Activated naive CD4-positive, alpha-beta T cell treated with anti-CD3 and anti-CD28 coated beads for 36 hours (primary cell): ENCODE measurements at regions of chr1 and their contacts with region 1.

Region 1: GRCh38 chr1:48471691-48472576 is at the start of gene SPATA6:
- DNase-seq: peak; percentile 97
- H3K4me3 Mint-ChIP-seq: peak within 1 kb of the TSS; percentile 80
- H3K27ac Mint-ChIP-seq: no peak within 1 kb of the TSS
- H3K4me1 Mint-ChIP-seq: peaks cover 23% of the 10 kb centered on the region
- H3K27me3 Mint-ChIP-seq: peaks cover 20% of the 10 kb centered on the region
- total RNA-seq, gene SPATA6: 1.6 to 1.8 TPM

Region 2: GRCh38 chr1:47313915-47314664 is 1157.8 kb before region 1 on chr1 and contains the start of gene STIL:
- CTCF ChIA-PET with region 1: no interaction called
- intact Hi-C with region 1: loop called (anchors 5 kb)
- DNase-seq: peak; percentile 99
- H3K4me3 Mint-ChIP-seq: peak within 1 kb of the TSS; percentile 96
- H3K27ac Mint-ChIP-seq: peak within 1 kb of the TSS; percentile 95
- H3K4me1 Mint-ChIP-seq: peaks cover 10% of the 10 kb centered on the region
- H3K27me3 Mint-ChIP-seq: no peaks in the 10 kb centered on the region
- total RNA-seq, gene STIL: 41.4 to 43.5 TPM

Region 3: GRCh38 chr1:48223366-48224240 is 248.3 kb before region 1 on chr1:
- CTCF ChIA-PET with region 1: no interaction called
- intact Hi-C with region 1: loop called (anchors 2 kb)
- DNase-seq: no peak
- H3K4me3 Mint-ChIP-seq: no peak overlapping the region
- H3K27ac Mint-ChIP-seq: no peak overlapping the region
- H3K4me1 Mint-ChIP-seq: peaks cover 2% of the 10 kb centered on the region
- H3K27me3 Mint-ChIP-seq: no peaks in the 10 kb centered on the region

Region 4: DNA sequence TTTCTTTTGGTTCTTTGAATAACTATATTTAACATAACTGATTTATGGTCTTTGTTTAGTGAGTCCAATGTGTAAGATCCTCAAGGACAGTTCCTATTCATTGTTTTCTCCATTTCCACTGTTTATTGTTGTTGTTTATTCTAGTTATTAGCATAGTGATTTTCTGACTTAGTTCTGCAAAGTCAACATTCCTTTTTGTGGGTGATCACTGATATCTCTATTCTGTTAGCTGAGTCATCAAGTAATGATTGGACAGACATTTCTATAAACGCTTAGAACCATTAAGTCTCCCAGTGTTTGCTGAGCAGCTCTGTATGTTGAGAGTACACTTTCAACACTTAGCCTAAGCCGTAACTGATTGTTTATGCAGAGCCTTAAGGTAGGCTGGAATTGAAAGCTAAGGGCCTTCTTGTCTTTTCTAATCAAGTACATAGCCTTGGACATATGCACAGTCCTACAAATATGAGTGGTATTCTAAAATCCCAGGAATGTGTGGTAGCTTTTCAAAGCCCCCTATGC is 162.3 kb before region 1 on chr1:
- CTCF ChIA-PET with region 1: no interaction called
- intact Hi-C with region 1: no loop called
- DNase-seq: no peak
- H3K4me3 Mint-ChIP-seq: no peak overlapping the region
- H3K27ac Mint-ChIP-seq: no peak overlapping the region
- H3K4me1 Mint-ChIP-seq: no peaks in the 10 kb centered on the region
- H3K27me3 Mint-ChIP-seq: no peaks in the 10 kb centered on the region

Region 5: DNA sequence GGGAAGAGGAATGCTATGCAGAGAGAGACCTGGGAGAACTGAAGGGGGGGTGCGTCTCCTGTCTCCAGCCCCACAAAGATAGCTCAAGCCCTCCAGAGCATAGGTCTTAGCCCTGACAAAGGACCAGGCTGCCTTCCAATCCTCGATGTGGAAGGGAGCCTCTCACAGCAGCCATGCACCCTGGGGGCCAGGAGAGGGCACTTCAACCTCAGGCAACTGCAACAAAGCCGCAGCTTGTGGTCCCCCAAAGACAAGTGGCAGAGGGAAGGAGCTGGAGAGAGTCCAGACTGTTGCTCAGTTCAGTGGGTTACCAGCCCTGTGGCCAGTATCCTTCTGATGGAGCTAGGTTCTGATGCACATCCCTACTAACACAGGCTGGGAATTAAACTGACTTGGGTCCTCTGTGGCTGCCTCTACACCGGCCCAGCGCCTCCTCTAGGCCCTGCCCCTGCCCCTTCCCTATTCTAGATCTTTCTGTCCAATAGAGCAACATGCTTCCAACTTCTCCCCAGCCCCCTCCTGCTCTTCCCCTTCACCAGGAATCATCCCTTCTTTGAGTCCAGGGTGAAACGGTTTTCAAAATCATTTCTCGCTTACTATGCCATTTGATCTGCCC is 100.8 kb after region 1 on chr1:
- CTCF ChIA-PET with region 1: no interaction called
- intact Hi-C with region 1: no loop called
- DNase-seq: peak; percentile 38
- H3K4me3 Mint-ChIP-seq: no peak overlapping the region
- H3K27ac Mint-ChIP-seq: no peak overlapping the region
- H3K4me1 Mint-ChIP-seq: no peaks in the 10 kb centered on the region
- H3K27me3 Mint-ChIP-seq: peaks cover 14% of the 10 kb centered on the region

Region 6: DNA sequence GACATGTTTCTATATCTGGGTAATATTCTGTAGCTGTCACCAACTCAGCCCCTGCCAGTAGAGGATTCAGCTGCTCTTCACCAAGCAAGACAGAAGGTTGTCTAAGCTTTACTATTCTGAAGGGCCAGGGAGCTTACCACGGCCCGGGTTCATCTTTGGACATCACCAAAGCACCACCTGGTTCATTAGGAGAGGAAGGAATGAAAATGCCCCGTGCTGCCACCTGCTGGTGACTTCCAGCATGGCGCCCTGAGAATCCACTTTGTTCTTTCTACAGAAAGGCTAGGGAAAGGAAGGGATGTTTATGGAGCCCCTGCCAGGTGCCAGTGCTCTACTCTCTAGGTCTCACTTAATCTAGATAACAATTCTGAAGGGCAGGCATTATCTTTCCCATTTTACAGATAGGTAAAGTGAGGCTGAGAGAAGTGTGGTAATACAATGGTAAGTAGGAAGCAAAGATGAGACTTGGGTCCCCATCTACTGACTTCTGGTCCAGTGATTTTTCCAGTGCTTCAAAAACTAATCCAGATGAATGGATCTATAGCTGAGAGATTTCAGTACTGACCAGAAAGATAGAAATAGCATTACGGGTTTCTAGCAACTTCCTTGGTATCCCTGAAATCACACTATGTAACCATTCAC is 225.3 kb after region 1 on chr1:
- CTCF ChIA-PET with region 1: no interaction called
- intact Hi-C with region 1: no loop called
- DNase-seq: peak; percentile 75
- H3K4me3 Mint-ChIP-seq: no peak overlapping the region
- H3K27ac Mint-ChIP-seq: no peak overlapping the region
- H3K4me1 Mint-ChIP-seq: no peaks in the 10 kb centered on the region
- H3K27me3 Mint-ChIP-seq: peaks cover 14% of the 10 kb centered on the region

Region 7: GRCh38 chr1:48776393-48777218 is 304.7 kb after region 1 on chr1 and contains the start of gene BEND5:
- CTCF ChIA-PET with region 1: no interaction called
- intact Hi-C with region 1: loop called (anchors 10 kb)
- DNase-seq: peak; percentile 54
- H3K4me3 Mint-ChIP-seq: peak within 1 kb of the TSS; percentile 86
- H3K27ac Mint-ChIP-seq: peak within 1 kb of the TSS; percentile 52
- H3K4me1 Mint-ChIP-seq: peaks cover 42% of the 10 kb centered on the region
- H3K27me3 Mint-ChIP-seq: no peaks in the 10 kb centered on the region
- total RNA-seq, gene BEND5: 1.0 to 1.8 TPM